Activated T-helper 2 cell treated with anti-CD3 and anti-CD28 coated beads, Interferon-gamma antibody, Interleukin-2, Interleukin-4, amounts not matched to agents 10 μg/mL and 5 μg/mL and 100 μg/mL, durations not matched to agents 14 hours and 24 hours and 36 hours (primary cell): ENCODE measurements at regions of chr6 and their contacts with region 1.

Region 1: GRCh38 chr6:43143235-43144124 is 27.6 kb upstream of the SRF start:
- DNase-seq: peak; percentile 70
- H3K4me3 Mint-ChIP-seq: no peak overlapping the region
- H3K27ac Mint-ChIP-seq: peak overlapping the region; percentile 25
- H3K4me1 Mint-ChIP-seq: peaks cover 8% of the 10 kb centered on the region
- H3K27me3 Mint-ChIP-seq: no peaks in the 10 kb centered on the region

Region 2: DNA sequence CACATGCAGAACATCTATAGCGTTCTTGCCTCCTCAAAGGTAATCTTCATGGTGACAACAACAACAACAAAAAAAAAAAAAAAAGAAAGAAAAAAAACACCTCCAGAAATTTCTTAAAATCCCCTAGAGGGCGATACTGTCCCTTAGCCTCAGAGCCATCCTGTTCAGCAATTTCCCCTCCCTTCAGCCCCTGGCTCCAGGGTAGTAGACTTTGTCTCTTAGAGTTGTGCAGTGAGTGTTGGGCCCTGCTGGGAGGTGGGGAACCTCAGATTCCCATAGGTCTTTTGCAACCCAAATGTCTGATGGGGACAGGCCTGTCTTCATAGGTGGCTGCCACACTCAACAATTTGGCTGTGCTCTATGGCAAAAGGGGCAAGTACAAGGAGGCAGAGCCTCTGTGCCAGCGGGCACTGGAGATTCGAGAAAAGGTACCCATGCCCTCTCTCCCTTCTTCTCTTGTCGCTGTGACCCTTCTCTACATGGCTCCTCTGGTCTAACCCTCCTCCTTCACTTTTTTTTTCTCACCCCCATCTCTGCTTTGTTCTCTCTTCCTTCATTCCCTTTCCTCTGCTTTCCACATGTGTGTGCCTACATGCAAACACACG is 73.3 kb before region 1 on chr6:
- intact Hi-C with region 1: loop called (anchors 1 kb)
- DNase-seq: no peak
- H3K4me3 Mint-ChIP-seq: no peak overlapping the region
- H3K27ac Mint-ChIP-seq: no peak overlapping the region
- H3K4me1 Mint-ChIP-seq: peaks cover 4% of the 10 kb centered on the region
- H3K27me3 Mint-ChIP-seq: peaks cover 2% of the 10 kb centered on the region

Region 3: DNA sequence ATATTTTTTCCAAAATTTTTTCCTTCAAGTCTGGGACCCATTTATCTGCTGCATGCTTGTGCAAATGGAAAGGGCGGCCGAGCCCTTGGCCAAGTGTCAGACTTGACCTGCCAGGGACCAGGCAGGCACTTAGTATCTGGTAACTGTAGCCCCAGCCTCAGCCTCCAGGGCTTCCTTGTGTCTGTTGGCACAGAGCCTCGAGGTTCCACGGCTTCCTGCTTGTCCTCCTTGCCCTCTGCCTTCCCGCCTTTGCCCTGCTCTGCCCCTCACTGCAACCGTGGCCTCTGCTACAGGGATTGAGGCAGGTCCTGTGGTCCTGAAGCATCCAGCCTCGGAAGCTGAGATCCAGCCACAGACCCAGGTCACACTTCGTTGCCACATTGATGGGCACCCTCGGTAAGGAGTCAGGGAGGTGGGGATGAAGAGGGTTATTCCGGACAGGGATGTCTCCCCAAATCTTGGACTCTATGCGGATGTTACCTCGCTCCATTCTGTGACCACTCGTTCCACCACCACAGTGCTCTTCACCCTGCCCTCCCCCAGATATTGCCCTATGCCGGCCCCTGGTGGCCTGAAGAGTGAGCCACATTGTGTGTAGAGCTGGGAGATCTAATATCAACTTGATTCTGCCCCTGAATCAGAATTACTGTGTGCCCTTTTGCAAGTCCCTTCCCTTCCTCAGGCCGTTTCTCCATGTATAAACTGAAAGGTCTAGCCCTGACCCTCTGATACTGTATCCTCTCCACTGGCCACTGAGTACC is 13.9 kb before region 1 on chr6:
- intact Hi-C with region 1: no loop called
- DNase-seq: no peak
- H3K4me3 Mint-ChIP-seq: no peak overlapping the region
- H3K27ac Mint-ChIP-seq: no peak overlapping the region
- H3K4me1 Mint-ChIP-seq: no peaks in the 10 kb centered on the region
- H3K27me3 Mint-ChIP-seq: no peaks in the 10 kb centered on the region